ENCODE measurements at regions of chr1 and their contacts with region 1.

Region 1: DNA sequence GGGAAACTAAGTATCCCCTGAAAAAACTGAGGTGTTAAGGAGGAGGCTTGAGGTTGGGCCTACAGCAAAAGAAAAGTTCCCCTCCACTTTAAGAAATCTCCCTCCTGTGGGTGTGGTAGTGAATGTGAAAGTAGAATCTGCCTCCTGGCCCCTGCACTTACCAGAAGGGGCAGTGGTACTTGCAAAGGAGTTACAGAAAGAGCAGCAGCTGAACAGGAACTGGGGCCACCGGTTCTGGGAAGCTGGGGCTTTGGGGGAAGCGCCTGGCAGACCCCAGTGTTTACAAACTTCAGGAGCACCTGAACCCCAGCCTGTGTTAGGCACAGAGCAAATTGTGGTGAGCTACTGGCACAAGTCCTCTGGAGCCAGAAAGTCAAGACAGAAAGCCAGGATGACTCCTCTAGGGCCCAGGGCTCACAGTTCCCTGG is 250.2 kb upstream of the FGGY start:
- DNase-seq: no peak
- ATAC-seq: no peak

Region 2: DNA sequence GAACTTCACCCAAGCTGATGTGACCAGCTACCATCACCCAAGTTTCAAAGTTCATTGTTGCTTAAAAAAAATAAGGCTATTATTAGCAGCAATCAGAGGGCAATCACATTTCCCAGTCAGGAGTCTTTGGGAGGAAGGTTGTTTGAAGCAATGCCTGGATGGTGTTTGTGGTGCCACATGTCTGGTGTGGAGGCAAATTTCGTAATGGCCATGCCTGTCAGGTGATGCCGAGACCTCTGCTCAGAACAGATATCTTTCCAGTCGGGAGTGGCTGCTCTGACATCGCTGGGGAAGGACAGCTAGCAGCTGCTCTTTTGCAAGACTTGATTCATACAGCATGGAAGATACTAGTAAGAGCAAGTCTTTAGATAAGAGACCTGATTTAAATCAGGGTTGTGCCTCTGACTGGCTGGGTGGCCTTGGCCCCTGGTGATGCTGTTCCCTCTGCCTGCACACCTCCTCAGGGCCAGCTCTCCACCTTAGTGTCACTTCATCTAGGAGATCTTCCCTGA is 75.1 kb before region 1 on chr1:
- intact Hi-C with region 1: loop called (anchors 10 kb)
- DNase-seq: no peak
- ATAC-seq: peak; percentile 75

Region 3: DNA sequence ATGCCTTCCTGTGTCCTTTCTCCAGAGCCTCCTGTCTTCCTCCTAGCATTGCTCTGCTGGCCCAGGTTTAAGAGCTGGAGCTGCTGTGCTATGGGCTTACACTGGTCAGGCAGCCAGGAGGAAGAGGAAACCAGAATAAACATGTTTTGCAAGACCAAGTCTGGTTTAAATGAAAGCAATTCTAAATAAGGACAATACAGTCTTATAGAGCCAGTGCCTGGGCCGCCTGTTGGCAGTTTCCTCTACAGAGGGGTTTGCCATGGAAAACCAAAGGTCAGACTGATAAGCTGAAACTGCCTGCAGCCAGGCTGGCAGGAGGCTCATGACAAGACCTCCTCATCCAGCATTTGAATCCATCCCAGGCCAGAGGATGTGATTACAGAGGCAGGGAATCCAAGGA is 157.3 kb after region 1 on chr1:
- intact Hi-C with region 1: no loop called
- DNase-seq: peak; percentile 78
- ATAC-seq: peak; percentile 95